MCF 10A (cell line): ENCODE measurements at regions of chr6 and their contacts with region 1.

Region 1: DNA sequence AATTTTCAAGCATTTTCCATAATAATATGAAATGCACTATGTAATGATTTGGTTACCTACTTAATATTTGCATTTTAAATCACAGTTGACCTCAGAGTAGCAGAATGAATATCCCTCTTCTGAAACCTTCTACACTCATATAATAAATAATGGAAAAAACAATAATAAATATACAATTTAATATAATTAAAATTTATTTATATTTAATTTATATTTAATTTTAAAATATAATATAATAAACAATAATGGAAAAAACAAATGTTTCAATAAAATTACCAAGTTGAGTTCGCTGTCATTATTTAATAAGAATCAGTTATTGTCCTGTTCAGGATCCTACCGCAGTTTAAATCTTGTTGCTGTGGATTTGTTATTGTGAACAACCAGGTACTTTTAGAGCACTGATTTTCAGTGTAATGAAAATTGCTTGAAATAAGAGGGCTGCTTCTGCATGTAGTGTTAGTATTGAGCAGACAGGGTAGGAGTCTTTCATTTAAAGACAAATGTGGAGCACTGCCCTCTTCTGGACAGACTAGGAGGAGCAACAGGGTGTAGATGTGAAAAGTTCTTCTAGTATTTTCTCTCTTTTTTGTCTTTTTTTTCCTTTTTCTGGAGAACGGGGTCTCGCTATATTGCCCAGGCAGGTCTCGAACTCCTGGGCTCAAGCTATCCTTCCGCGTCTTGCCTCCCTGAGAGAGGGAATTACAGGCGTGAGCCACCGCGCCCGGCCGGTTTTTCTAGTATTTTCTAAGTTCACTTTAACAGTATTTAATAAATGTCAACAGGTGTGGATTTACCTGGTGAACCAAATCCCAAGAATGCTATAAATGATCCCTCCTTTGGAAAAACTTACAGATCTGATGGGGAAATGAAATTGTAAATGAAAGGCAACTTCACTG is 13.6 kb downstream of the TRAPPC3L start:
- DNase-seq: peak; percentile 72
- H3K4me3 Mint-ChIP-seq: no peak overlapping the region
- H3K27ac Mint-ChIP-seq: no peak overlapping the region
- H3K4me1 Mint-ChIP-seq: peaks cover 19% of the 10 kb centered on the region
- H3K27me3 Mint-ChIP-seq: no peaks in the 10 kb centered on the region
- CTCF ChIP-seq: peak; percentile 70

Region 2: GRCh38 chr6:116268589-116269293 is 263.2 kb before region 1 on chr6:
- CTCF ChIA-PET with region 1: interaction called, 94 read pairs
- POLR2A ChIA-PET with region 1: interaction called, 3 read pairs
- intact Hi-C with region 1: loop called (anchors 1 kb)
- DNase-seq: peak; percentile 82
- H3K4me3 Mint-ChIP-seq: no peak overlapping the region
- H3K27ac Mint-ChIP-seq: peak overlapping the region; percentile 49
- H3K4me1 Mint-ChIP-seq: peaks cover 17% of the 10 kb centered on the region
- H3K27me3 Mint-ChIP-seq: no peaks in the 10 kb centered on the region
- CTCF ChIP-seq: peak; percentile 80

Region 3: GRCh38 chr6:116371120-116371917 is 160.6 kb before region 1 on chr6:
- CTCF ChIA-PET with region 1: interaction called, 3 read pairs
- POLR2A ChIA-PET with region 1: no interaction called
- intact Hi-C with region 1: loop called (anchors 2 kb)
- DNase-seq: peak; percentile 94
- H3K4me3 Mint-ChIP-seq: peak overlapping the region; percentile 85
- H3K27ac Mint-ChIP-seq: peak overlapping the region; percentile 88
- H3K4me1 Mint-ChIP-seq: peaks cover 32% of the 10 kb centered on the region
- H3K27me3 Mint-ChIP-seq: no peaks in the 10 kb centered on the region
- CTCF ChIP-seq: no peak

Region 4: GRCh38 chr6:116511404-116512110 is 20.4 kb before region 1 on chr6 and contains the start of gene CALHM5:
- CTCF ChIA-PET with region 1: interaction called, 24 read pairs
- POLR2A ChIA-PET with region 1: no interaction called
- intact Hi-C with region 1: no loop called
- DNase-seq: peak; percentile 75
- H3K4me3 Mint-ChIP-seq: no peak within 1 kb of the TSS
- H3K27ac Mint-ChIP-seq: no peak within 1 kb of the TSS
- H3K4me1 Mint-ChIP-seq: peaks cover 6% of the 10 kb centered on the region
- H3K27me3 Mint-ChIP-seq: no peaks in the 10 kb centered on the region
- CTCF ChIP-seq: peak; percentile 59
- total RNA-seq, gene CALHM5: not detected in 2 replicates

Region 5: DNA sequence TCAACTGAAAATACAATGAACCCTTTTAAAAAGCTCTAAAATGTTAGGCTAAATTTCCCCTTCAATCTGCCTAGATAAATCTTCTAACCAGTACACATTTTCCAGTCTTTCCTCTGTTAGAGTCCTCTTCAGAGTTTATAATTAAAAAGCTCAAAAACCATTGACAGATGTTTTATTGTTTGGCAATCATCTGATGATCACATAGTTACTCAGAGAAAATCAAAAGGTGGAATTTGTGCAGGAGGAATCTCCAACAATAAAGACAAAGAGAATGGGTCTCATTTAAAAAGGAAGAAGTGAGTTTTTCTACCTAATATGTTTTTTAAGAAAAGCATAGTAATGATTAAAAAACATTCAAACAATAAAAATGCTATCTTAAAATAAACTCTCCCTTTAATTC is 10.5 kb after region 1 on chr6:
- CTCF ChIA-PET with region 1: interaction called, 25 read pairs
- POLR2A ChIA-PET with region 1: no interaction called
- intact Hi-C with region 1: no loop called
- DNase-seq: no peak
- H3K4me3 Mint-ChIP-seq: no peak overlapping the region
- H3K27ac Mint-ChIP-seq: no peak overlapping the region
- H3K4me1 Mint-ChIP-seq: no peaks in the 10 kb centered on the region
- H3K27me3 Mint-ChIP-seq: no peaks in the 10 kb centered on the region
- CTCF ChIP-seq: no peak

Region 6: GRCh38 chr6:116561377-116562018 is 29.6 kb after region 1 on chr6:
- CTCF ChIA-PET with region 1: interaction called, 108 read pairs
- POLR2A ChIA-PET with region 1: interaction called, 4 read pairs
- intact Hi-C with region 1: loop called (anchors 1 kb)
- DNase-seq: peak; percentile 75
- H3K4me3 Mint-ChIP-seq: no peak overlapping the region
- H3K27ac Mint-ChIP-seq: no peak overlapping the region
- H3K4me1 Mint-ChIP-seq: peaks cover 6% of the 10 kb centered on the region
- H3K27me3 Mint-ChIP-seq: no peaks in the 10 kb centered on the region
- CTCF ChIP-seq: peak; percentile 81

Region 7: GRCh38 chr6:116847227-116847626 is 315.3 kb after region 1 on chr6:
- CTCF ChIA-PET with region 1: no interaction called
- POLR2A ChIA-PET with region 1: no interaction called
- intact Hi-C with region 1: loop called (anchors 5 kb)
- DNase-seq: peak; percentile 47
- H3K4me3 Mint-ChIP-seq: no peak overlapping the region
- H3K27ac Mint-ChIP-seq: no peak overlapping the region
- H3K4me1 Mint-ChIP-seq: no peaks in the 10 kb centered on the region
- H3K27me3 Mint-ChIP-seq: peaks cover 63% of the 10 kb centered on the region
- CTCF ChIP-seq: peak; percentile 29

Region 8: DNA sequence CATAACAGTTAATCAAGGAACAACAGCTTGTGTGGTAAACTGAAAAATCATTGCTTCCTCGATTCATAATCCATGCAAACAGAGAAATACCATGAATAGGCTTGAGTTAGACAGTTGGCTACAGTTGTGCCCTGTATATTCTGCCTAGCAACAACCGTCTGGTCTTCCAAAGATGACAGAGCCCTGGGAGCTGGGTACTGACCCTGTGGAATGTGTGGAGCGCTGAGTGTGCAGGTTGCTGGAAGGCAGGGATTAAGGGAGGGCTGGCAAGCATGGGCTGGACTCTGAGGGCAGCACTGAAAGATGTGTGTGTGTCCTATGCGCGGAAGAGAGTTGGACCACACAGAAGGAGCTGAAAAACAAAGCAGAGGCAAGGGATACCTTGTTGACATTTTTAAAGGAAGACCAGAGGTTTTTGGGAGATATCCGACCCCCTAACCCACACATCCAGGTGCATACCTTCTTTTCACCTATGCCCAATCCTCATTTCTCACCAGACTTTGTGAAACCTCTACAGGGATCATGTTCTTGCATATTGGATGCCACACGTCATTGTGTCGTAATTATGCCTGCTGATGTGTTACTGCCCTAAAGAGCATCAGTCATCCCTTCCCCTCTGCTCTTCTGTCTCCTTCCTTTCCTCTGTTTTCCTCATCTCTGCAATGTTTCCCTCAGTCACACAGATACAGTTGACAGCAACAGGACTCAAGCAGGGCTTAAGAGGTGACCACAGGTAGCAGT is 675.2 kb after region 1 on chr6:
- CTCF ChIA-PET with region 1: no interaction called
- POLR2A ChIA-PET with region 1: no interaction called
- intact Hi-C with region 1: no loop called
- DNase-seq: peak; percentile 31
- H3K4me3 Mint-ChIP-seq: no peak overlapping the region
- H3K27ac Mint-ChIP-seq: no peak overlapping the region
- H3K4me1 Mint-ChIP-seq: no peaks in the 10 kb centered on the region
- H3K27me3 Mint-ChIP-seq: peaks cover 38% of the 10 kb centered on the region
- CTCF ChIP-seq: no peak